ENCODE measurements at regions of chr11 and their contacts with region 1.

Region 1: DNA sequence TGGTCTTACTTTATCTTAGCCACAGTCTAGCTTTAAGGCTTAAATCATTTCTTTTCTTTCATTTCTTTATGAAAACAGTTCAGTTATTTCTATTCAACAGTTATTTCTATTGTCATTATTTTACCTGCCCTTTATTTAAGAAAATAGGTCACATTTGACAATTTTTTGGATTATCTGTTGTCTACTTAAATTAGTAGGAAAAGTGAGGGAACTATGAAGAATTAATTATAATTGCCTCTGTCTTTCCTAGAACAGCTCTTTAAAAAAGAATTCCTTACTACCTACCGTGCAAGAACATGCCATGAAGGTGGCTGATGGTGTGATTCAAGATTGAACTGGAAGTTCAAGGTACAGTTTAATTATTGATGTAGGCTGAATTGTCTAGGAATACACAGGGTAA is at the start of gene OR4C6:
- DNase-seq: no peak
- ATAC-seq: no peak
- H3K4me3 ChIP-seq: no peak within 1 kb of the TSS
- H3K27ac ChIP-seq: no peak within 1 kb of the TSS
- H3K4me1 ChIP-seq: no peaks in the 10 kb centered on the region
- H3K27me3 ChIP-seq: no peaks in the 10 kb centered on the region
- CTCF ChIP-seq: no peak
- total RNA-seq, gene OR4C6: not detected

Region 2: DNA sequence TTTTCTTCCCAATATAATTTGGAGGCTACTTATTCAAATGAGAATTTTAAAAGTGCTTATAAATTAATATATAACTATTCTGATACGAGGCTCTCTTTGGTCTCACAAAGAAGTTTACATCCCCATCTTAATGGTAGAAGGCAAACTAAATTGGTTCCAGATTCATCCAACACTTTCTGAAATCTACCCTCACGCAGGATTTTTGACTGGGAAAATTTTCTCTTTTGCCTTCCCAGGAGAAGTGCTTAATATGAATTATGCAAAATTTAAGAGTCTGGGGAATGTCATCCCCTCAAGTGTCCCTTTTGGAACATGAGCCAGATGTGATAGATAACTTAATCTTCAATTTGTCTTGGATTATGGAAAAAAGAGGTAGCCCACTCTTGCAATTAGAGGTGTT is 54.4 kb before region 1 on chr11 and contains the start of gene OR4C11:
- intact Hi-C with region 1: loop called in 1 of 10 experiments (anchors 10 kb)
- DNase-seq: no peak
- ATAC-seq: no peak
- H3K4me3 ChIP-seq: no peak within 1 kb of the TSS
- H3K27ac ChIP-seq: no peak within 1 kb of the TSS
- H3K4me1 ChIP-seq: no peaks in the 10 kb centered on the region
- H3K27me3 ChIP-seq: no peaks in the 10 kb centered on the region
- CTCF ChIP-seq: no peak
- total RNA-seq, gene OR4C11: not detected